Sigmoid colon (tissue), 7 donors: ENCODE measurements at regions of chr1 and their contacts with region 1.

Region 1: DNA sequence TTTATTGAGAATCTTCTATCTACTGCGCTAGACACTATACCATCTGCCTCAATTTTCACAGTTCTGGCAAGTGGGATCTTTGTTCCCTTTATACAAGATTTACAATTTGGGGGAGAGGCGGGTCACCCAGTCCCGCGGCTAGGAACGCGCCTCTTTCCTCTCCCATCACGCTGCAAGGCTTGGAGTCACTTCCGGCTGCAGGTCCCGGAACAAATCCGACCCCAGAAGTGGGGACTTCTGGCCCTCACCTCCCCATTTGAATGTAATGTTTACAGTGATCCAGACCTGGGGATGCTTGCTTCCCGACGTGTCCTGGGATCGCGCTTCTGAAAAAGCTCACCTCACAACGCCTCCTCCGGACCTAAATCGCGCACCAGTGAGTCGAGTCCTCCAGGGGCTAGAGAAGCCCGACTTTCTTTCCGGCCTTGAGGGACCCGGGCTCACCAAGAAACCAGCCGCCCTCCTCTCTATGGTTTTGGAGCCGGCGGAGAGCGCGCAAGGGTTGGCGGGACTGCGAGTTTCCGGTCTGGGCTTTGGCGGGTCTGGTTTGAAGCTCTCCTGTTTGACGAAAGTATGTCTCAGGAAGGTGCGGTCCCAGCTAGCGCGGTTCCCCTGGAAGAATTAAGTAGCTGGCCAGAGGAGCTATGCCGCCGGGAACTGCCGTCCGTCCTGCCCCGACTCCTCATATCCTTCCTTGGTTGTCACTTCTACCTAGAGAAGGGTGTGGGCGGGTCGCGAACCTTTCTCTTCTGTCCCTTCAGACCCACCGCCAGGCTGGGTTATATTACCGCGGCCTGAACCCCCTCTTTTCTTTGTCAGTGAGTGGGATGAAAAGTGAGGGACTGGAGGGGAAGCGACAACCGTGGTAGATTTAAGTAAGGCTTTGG is at the start of gene METTL18:
- DNase-seq: peak; percentile 94
- H3K4me3 ChIP-seq: peak within 1 kb of the TSS; percentile 61 to 72 (median 67)
- H3K27ac ChIP-seq: peak within 1 kb of the TSS; percentile 83 to 87 (median 86)
- H3K4me1 ChIP-seq: peaks cover 0 to 17% (median 11%) of the 10 kb centered on the region in 4 donors
- H3K27me3 ChIP-seq: no peaks in the 10 kb centered on the region
- CTCF ChIP-seq: no peak
- EP300 ChIP-seq: peak in 1 of 4 donors; percentile 13
- POLR2A ChIP-seq: no peak
- total RNA-seq, gene METTL18: 4.9 to 14.5 (median 8.9) TPM

Region 2: DNA sequence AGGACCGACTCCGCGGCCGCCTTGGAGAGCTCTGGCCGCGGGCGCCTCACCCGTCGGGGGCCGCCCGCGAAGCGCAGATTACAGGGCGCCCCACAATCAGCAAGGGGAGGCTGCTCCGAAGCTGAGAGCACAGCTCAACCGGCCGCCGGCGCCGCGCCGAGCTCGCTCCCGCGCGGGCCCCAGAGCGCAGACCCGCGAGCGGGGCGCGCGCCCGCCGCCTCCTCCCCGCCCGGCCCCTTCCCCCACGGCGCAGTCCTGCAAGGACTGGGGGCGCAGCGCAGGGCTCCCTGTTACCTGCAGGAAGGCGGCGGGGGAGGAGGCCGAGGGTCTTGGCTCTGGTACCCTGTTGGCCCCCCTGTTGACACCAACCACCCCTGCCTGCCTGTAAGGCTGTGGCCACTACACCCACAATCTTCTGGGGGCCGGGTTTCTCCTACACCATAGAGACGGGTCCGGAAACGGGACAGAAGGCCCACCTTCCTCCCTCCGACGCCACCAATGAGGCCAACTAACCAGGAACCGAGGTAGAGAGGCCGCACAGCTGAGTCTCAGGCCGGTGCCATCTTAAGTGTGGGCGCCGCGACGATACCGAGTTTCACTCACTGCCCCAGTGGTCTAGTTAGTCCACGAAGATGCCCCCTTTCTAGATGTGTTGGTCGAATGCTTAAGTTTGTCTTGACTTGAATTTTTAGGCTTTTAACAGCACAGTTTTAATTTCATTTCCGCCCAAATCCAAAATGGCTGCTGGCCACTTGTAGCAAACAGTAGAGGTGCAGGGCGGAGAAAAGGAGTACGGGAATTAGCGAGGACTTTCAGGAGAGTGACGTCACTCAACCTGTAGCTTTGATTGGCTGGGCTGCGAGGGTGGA is 99.0 kb after region 1 on chr1 and contains the start of gene SCYL3:
- intact Hi-C with region 1: loop called (anchors 5 kb)
- DNase-seq: peak; percentile 98
- H3K4me3 ChIP-seq: peak within 1 kb of the TSS; percentile 83 to 96 (median 86)
- H3K27ac ChIP-seq: peak within 1 kb of the TSS; percentile 94 to 99 (median 97)
- H3K4me1 ChIP-seq: peaks cover 0 to 22% (median 17%) of the 10 kb centered on the region in 4 donors
- H3K27me3 ChIP-seq: no peaks in the 10 kb centered on the region
- CTCF ChIP-seq: no peak
- EP300 ChIP-seq: peak in 2 of 4 donors; percentile 25 to 44
- POLR2A ChIP-seq: peak; percentile 7 to 17
- total RNA-seq, gene SCYL3: 9.6 to 13.3 (median 12.8) TPM